Activated T-helper 2 cell treated with anti-CD3 and anti-CD28 coated beads, Interferon-gamma antibody, Interleukin-2, Interleukin-4, amounts not matched to agents 10 μg/mL and 5 μg/mL and 100 μg/mL, durations not matched to agents 14 hours and 24 hours and 36 hours (primary cell): ENCODE measurements at regions of chr7 and their contacts with region 1.

Region 1: GRCh38 chr7:40329601-40330153 is 194.9 kb downstream of the SUGCT start:
- DNase-seq: no peak
- H3K4me3 Mint-ChIP-seq: no peak overlapping the region
- H3K27ac Mint-ChIP-seq: no peak overlapping the region
- H3K4me1 Mint-ChIP-seq: no peaks in the 10 kb centered on the region
- H3K27me3 Mint-ChIP-seq: no peaks in the 10 kb centered on the region

Region 2: DNA sequence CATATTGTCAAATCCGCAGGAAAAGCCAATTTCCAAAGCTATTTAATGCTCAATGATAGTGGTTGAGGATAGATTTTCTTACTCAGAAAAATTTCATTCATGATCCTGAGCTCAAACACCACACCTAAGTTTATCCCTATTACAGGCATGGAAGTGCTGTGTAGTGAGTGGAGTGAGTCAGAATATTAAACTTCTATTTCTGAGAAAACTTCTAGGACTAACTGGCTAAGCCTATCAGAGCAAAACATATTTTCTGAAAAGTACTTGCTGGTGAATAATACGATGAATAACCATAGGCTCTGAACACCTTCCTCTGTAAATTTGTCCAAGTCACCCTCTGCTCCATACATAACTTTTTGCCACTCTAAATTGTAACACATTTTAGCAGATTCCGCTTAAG is 26.6 kb after region 1 on chr7:
- intact Hi-C with region 1: no loop called
- DNase-seq: no peak
- H3K4me3 Mint-ChIP-seq: no peak overlapping the region
- H3K27ac Mint-ChIP-seq: no peak overlapping the region
- H3K4me1 Mint-ChIP-seq: no peaks in the 10 kb centered on the region
- H3K27me3 Mint-ChIP-seq: no peaks in the 10 kb centered on the region

Region 3: DNA sequence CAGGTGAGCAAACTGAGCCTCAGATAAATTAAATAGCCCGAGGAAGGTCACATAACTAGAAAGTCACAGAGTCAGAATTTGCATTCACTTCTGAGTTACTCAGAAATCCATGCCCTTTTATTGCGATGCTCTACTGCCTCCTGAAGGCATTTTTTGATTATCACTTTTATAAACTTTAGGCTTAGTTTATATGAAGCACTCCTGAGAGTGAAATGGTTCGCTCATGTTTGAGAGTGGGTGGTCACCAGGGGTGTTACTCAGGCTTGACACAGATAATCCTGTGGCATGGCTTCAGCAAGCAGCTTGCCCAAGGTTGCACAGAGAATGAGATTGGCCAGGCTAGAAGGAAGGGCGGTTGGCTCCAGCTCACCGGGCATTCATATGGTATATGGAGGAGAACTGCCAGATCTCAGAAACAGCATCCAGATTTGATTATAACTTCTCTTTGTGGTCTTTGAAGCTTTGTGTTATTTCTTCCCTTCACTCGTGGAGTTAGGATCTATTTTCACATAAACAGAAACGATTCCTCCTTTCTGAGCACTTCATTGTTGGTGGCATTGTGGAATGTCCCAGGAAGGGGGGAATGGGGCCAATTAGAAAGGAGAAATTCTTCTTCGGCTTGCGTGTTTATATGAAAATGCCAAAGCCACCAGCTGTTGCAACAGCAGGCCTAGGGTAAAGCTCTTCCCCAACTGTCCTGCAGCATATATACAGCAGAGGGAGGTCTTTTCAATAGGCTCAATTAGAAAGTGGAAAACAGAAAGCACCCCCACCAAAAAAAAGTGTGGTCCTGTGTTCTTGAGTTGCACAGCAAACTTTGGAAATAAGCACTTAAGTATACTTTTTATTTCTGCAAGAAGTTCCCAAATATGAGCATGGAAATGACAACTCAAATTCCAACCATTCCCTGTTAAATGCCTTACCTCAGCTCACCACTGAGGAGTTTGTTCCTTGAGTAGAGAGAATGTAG is 433.9 kb after region 1 on chr7:
- intact Hi-C with region 1: loop called (anchors 5 kb)
- DNase-seq: no peak
- H3K4me3 Mint-ChIP-seq: no peak overlapping the region
- H3K27ac Mint-ChIP-seq: no peak overlapping the region
- H3K4me1 Mint-ChIP-seq: no peaks in the 10 kb centered on the region
- H3K27me3 Mint-ChIP-seq: no peaks in the 10 kb centered on the region